BJ (cell line): ENCODE measurements at regions of chr2 and their contacts with region 1.

Region 1: DNA sequence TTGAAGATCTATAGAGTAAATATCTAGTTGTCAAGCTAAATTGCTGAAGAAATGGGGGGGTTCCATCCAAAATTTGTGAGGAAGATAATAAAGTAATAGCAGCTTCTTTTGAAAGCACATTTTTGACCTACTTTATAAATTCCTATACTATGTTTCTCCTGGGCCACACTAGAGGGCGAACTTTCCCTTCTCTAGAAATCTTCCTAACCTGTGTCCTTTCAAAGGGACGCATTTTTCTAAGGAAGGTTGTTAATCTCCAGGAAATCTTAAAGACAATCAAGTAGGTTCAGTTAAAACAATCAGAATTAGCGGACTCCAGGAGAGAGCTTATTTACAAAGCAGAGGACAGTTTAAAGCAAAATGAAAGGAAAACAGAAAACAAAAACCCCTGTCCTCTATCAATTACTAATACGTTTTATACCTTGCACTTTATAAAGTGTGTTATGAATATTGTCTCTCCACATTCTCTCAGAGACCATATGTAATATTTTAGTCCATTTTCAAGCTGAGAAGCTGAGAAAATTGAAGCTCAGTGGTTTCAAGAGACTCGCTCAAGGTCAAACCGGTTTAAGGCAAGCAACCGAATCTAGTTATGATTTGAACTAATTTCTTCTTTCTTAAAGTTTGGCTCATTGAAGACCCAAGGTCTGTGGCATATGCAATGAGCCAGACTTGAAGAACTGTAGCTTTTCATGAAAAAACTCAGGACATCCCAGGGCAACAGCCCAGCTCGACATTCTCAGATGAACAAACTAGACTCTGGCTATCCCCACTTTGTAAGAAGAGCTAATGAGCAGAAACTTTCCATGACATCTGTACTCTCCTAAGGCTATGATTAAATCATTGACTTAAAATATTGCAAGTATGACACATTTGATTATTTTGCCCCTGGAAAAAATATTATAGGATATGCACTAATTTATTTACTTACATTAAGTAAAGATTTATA is 273.6 kb downstream of the PAX3 start:
- DNase-seq: no peak
- H3K4me3 ChIP-seq: no peak overlapping the region
- H3K27me3 ChIP-seq: 0 out of 2 replicates have a peak, but pooled peaks cover 1% of the 10 kb centered on the region
- CTCF ChIP-seq: peak; percentile 79

Region 2: GRCh38 chr2:222038067-222038802 is 13.0 kb after region 1 on chr2:
- CTCF ChIA-PET with region 1: interaction called, 49 read pairs
- POLR2A ChIA-PET with region 1: no interaction called
- DNase-seq: no peak
- H3K4me3 ChIP-seq: no peak overlapping the region
- H3K27me3 ChIP-seq: no peaks in the 10 kb centered on the region
- CTCF ChIP-seq: peak; percentile 50

Region 3: GRCh38 chr2:222043891-222044290 is 18.7 kb after region 1 on chr2:
- CTCF ChIA-PET with region 1: interaction called, 49 read pairs
- POLR2A ChIA-PET with region 1: no interaction called
- DNase-seq: no peak
- H3K4me3 ChIP-seq: no peak overlapping the region
- H3K27me3 ChIP-seq: peaks cover 4% of the 10 kb centered on the region; the same call in 1 of the 2 replicates
- CTCF ChIP-seq: no peak